ENCODE measurements at regions of chr6 and their contacts with region 1.

Region 1: GRCh38 chr6:42766141-42766670 is 15.6 kb upstream of the BICRAL start:
- DNase-seq: peak; percentile 81
- ATAC-seq: peak; percentile 83
- H3K4me3 ChIP-seq: no peak overlapping the region
- H3K27ac ChIP-seq: no peak overlapping the region
- H3K4me1 ChIP-seq: peaks cover 5% of the 10 kb centered on the region; the same call in 1 of the 2 replicates
- H3K27me3 ChIP-seq: no peaks in the 10 kb centered on the region
- CTCF ChIP-seq: no peak
- POLR2A ChIP-seq: no peak
- RAD21 ChIP-seq: no peak

Region 2: DNA sequence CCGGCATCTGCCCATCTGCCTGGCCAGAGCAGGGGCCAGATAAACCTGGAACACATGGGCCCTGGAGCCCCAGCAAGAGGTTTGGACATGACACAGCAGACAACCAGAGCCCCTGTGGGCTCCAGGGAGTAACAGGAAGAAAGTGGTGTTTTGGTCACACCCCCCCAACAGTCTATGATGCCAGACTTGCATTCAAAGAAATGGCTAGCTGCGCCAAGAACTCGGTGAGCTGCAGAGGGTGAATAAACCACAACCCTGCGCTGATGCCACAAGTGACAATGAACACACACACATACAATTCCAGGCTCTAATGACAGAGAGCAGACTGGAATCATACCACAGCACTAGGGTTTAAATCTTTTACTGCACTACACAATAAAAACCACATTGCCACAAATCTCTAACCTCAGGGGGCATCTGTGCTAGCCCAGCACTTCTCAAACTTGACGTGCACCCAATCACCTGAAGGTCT is 348.5 kb before region 1 on chr6:
- CTCF ChIA-PET with region 1: no interaction called
- POLR2A ChIA-PET with region 1: no interaction called
- dilution Hi-C with region 1: no loop called
- in situ Hi-C with region 1: no loop called
- intact Hi-C with region 1: no loop called
- DNase-seq: no peak
- ATAC-seq: no peak
- H3K4me3 ChIP-seq: no peak overlapping the region
- H3K27ac ChIP-seq: no peak overlapping the region
- H3K4me1 ChIP-seq: peaks cover 11% of the 10 kb centered on the region
- H3K27me3 ChIP-seq: no peaks in the 10 kb centered on the region
- CTCF ChIP-seq: no peak
- POLR2A ChIP-seq: no peak
- RAD21 ChIP-seq: no peak

Region 3: DNA sequence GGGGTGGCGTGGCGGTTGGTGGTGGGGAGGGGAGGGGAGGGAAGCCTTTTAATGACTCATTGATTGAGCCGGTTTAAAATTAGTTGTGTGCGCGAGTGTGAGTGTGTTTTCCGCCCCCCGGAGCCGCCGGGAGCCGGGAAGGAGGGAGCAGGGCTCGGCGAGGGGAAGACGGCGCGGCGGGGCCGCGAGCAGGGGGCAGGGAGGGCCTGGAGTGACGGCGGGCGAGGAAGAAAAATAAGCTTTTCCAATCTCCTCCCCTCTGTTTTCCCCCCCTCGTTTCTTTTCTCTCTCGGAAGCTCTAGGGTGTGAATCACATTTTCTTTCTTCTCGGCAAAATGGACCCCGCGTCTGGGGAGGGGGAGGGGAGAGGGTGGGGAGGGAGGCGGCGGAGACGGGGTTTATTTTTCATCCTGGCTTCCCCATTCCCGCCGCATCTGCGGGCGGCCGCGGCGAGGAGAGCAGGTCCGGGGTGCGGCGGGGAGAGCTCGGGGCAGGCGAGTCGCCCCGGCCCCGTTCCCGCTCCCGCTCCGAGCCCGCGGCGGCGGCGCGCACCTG is 16.5 kb after region 1 on chr6:
- CTCF ChIA-PET with region 1: no interaction called
- POLR2A ChIA-PET with region 1: interaction called, 13 read pairs
- dilution Hi-C with region 1: no loop called
- in situ Hi-C with region 1: no loop called
- intact Hi-C with region 1: no loop called
- DNase-seq: peak; percentile 90
- ATAC-seq: peak; percentile 84
- H3K4me3 ChIP-seq: peak overlapping the region; percentile 96
- H3K27ac ChIP-seq: peak overlapping the region; percentile 98
- H3K4me1 ChIP-seq: peaks cover 7% of the 10 kb centered on the region
- H3K27me3 ChIP-seq: no peaks in the 10 kb centered on the region
- CTCF ChIP-seq: no peak
- POLR2A ChIP-seq: peak; percentile 79; the same call in 1 of the 2 replicates
- RAD21 ChIP-seq: 0 out of 2 replicates have a peak, but pooled peaks have one; percentile 15

Measured in IMR-90 (cell line).